Colonic mucosa (tissue), 4 donors: ENCODE measurements at regions of chr14 and their contacts with region 1.

Region 1: DNA sequence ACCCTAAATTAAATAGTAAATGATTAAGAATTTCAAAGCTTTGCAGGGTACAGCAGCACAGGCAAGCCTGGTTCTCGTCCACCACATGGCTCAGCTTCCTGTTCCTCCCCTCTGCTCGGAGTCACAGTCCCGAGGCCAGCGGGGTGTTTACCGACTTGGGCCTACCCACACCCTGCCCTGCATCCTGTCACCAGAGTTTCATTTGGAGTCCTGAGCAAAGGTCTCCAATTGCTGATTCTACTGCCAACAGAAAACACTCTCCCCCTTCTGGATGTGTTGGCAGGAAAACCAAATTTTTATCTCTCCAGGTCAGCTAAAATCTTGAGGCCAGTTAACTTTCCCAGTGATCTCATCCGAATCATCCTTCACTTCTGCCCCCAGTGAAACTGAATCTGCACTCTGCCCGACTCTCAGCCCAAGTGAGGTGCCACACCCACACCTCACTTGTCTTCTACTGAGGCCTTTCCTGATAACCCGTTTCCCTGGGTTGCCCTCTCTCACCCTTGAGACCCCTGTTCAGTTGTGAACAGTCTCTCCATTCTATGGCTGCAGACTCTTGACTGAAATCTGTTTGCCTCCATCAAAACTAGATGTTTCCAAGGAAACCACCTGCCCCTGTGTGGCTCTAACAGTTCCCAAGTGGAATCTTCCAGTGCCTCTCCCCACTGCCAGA is 71.2 kb downstream of the VCPKMT start:
- DNase-seq: peak; percentile 93
- H3K4me3 ChIP-seq: no peak overlapping the region
- H3K27ac ChIP-seq: peak overlapping the region; percentile 93
- H3K4me1 ChIP-seq: peaks cover 13% of the 10 kb centered on the region
- H3K27me3 ChIP-seq: no peaks in the 10 kb centered on the region
- CTCF ChIP-seq: no peak

Region 2: DNA sequence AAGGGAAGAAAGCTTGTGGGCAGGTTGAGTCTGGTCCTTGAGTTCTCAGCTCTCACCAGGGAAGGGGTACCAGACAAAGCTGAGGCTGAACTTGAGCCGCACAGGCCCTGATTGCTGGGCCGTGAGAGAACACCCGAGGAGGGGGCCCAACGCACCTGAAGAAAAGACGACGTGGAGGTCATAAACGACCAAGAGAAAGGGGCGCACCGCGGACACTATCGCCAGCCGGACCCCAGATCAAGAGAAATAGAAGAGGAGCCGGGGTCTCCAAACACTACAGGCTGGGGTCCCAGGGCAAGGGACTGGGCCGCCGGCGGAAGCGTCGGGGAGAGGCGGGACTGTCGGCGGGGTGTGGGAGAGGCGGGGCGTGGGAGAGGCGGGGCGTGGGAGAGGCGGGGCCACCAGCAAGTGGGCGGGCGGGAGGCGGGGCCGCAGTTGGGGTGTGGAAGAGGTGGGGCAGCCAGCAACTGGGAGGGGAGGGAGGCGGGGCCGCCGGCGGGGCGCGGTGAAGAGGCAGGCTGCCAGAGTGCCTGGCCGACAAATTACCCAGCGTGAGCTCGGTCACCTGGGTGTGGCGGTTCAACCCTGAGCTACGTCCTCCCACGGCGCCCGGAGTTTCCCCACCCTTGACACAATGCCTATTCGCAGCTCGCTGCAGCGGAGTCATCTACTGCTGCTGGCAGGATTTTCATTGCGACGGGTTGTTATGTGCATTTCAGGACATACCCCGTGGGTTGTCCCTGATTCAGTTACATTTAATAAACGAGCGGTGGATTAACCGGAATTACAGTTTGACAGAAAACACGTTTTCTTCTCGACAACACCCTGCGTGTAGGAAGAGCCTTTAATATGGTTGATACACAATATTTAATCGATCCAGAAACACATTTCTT is 177.1 kb before region 1 on chr14:
- intact Hi-C with region 1: loop called (anchors 5 kb)
- DNase-seq: peak; percentile 99
- H3K4me3 ChIP-seq: peak overlapping the region; percentile 40
- H3K27ac ChIP-seq: peak overlapping the region; percentile 77
- H3K4me1 ChIP-seq: peaks cover 4% of the 10 kb centered on the region
- H3K27me3 ChIP-seq: no peaks in the 10 kb centered on the region
- CTCF ChIP-seq: no peak

Region 3: DNA sequence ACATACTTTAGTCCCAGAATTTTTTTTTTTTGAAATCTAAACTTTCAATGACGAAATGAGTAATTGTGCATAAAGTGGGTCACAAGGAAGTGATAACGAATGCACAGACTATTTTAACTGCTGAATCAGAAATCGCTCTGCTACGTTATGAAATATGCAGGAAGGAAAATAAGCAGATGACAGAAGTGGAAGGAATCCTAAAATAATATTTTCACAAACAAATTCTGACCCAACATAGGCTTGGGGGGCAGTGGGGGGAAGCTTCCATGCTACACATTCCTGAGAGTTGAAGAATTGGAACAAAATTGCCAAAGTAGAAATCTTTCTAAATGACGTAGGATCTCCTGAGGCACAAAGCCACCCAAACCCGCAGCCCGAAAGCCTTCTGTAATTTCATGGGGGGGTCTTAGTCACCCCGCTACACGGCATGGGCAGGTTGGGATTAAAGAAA is 62.6 kb before region 1 on chr14:
- intact Hi-C with region 1: no loop called
- DNase-seq: no peak
- H3K4me3 ChIP-seq: no peak overlapping the region
- H3K27ac ChIP-seq: no peak overlapping the region
- H3K4me1 ChIP-seq: no peaks in the 10 kb centered on the region
- H3K27me3 ChIP-seq: no peaks in the 10 kb centered on the region
- CTCF ChIP-seq: no peak

Region 4: GRCh38 chr14:50008562-50009350 is 36.4 kb before region 1 on chr14:
- intact Hi-C with region 1: loop called (anchors 5 kb)
- DNase-seq: no peak
- H3K4me3 ChIP-seq: no peak overlapping the region
- H3K27ac ChIP-seq: no peak overlapping the region
- H3K4me1 ChIP-seq: peaks cover 7% of the 10 kb centered on the region
- H3K27me3 ChIP-seq: no peaks in the 10 kb centered on the region
- CTCF ChIP-seq: no peak

Region 5: DNA sequence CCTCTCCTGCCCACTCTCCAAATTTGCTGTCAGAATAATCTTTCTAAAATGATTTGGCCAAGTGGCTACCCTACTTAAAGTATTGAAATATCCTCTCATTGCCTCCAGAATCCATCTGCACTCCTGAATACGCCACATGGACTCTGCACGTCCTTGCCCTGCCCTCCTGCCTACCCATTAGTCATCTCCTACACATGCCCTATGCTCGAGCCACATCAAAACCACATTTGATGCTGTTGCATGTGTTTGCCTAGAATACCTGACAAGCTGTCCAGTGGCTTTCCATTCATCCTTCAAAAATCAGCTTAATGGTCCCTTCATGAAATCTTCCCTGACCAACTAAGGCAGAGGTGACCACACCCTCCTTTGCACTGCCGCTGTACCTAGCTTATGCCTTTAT is 54.2 kb after region 1 on chr14:
- intact Hi-C with region 1: loop called (anchors 10 kb)
- DNase-seq: peak; percentile 44
- H3K4me3 ChIP-seq: no peak overlapping the region
- H3K27ac ChIP-seq: no peak overlapping the region
- H3K4me1 ChIP-seq: no peaks in the 10 kb centered on the region
- H3K27me3 ChIP-seq: no peaks in the 10 kb centered on the region
- CTCF ChIP-seq: no peak